Activated naive CD4-positive, alpha-beta T cell treated with anti-CD3 and anti-CD28 coated beads, Interleukin-2, amount 10 ng/mL, durations not matched to agents 7 days and 5 days (primary cell): ENCODE measurements at regions of chr7 and their contacts with region 1.

Region 1: GRCh38 chr7:98745722-98746318 is 124.0 kb downstream of the TMEM130 start:
- DNase-seq: peak; percentile 79
- H3K4me3 Mint-ChIP-seq: no peak overlapping the region
- H3K27ac Mint-ChIP-seq: no peak overlapping the region
- H3K4me1 Mint-ChIP-seq: no peaks in the 10 kb centered on the region
- H3K27me3 Mint-ChIP-seq: no peaks in the 10 kb centered on the region

Region 2: GRCh38 chr7:98420966-98421612 is 324.7 kb before region 1 on chr7:
- CTCF ChIA-PET with region 1: interaction called, 16 read pairs
- DNase-seq: peak; percentile 72
- H3K4me3 Mint-ChIP-seq: no peak overlapping the region
- H3K27ac Mint-ChIP-seq: no peak overlapping the region
- H3K4me1 Mint-ChIP-seq: no peaks in the 10 kb centered on the region
- H3K27me3 Mint-ChIP-seq: peaks cover 8% of the 10 kb centered on the region

Region 3: DNA sequence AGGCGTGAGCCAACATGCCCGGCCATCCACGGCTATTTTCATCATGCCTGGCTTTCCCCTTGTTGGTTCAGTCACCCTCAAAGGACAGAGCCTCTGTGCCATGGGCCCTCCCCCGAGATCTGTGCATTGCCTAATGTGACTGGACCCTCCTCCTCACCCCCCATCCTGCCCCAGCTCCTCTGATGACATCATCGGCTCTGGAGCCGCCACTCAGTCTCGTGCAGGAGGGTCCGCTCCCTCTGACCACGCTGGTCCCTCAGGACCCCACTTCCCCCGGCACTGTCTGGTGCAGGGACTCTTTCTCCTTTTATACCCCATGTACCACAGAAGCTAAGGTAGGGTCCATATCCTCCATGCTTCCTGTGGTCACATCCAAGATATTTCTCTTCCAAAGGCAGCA is 311.7 kb before region 1 on chr7:
- CTCF ChIA-PET with region 1: interaction called, 31 read pairs
- DNase-seq: no peak
- H3K4me3 Mint-ChIP-seq: no peak overlapping the region
- H3K27ac Mint-ChIP-seq: no peak overlapping the region
- H3K4me1 Mint-ChIP-seq: peaks cover 9% of the 10 kb centered on the region
- H3K27me3 Mint-ChIP-seq: peaks cover 3% of the 10 kb centered on the region